HCT116 (cell line): ENCODE measurements at regions of chr6 and their contacts with region 1.

Region 1: DNA sequence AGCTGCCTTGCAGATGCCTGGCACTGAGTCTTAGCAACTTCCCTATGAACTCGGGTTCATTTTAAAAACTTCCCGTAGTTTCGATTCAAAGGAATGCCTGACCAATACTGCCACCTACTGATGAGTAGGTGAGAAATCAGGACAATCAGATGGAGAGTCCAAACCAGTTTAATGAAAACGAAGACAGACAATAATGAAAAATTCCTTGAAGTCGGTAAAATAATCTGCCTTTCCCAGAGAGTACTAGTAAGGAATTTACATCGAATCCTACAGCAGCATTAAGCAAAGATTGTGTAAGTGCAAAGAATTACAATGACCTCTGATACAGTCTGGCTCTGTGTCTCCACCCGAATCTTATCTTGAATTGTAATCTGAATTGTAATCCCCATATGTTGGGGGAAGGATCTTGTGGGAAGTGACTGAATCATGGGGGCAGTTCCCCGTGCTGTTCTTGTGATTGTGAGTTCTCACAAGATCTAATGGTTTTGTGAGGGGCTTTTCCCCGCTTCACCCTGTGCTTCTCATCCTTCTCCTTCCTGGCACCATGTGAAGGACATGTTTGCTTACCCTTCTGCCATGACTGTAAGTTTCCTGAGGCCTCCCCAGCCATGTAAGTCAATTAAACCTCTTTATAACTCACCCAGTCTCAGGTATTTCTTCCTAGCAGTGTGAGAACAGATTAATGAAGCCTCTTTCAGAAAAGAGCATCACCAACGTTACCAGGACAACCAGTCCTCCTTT is 134.4 kb downstream of the ARHGAP18 start:
- DNase-seq: peak; percentile 27
- ATAC-seq: peak; percentile 89
- H3K4me3 ChIP-seq: no peak overlapping the region
- H3K27ac ChIP-seq: peak overlapping the region; percentile 40
- H3K4me1 ChIP-seq: peaks cover 12 to 13% of the 10 kb centered on the region in 2 experiments; a peak in 3 of 4 replicates
- H3K27me3 ChIP-seq: no peaks in the 10 kb centered on the region
- CTCF ChIP-seq: peak; percentile 55 to 80 (median 68); a peak in 5 of 6 replicates
- POLR2A ChIP-seq: no peak
- RAD21 ChIP-seq: peak; percentile 85

Region 2: DNA sequence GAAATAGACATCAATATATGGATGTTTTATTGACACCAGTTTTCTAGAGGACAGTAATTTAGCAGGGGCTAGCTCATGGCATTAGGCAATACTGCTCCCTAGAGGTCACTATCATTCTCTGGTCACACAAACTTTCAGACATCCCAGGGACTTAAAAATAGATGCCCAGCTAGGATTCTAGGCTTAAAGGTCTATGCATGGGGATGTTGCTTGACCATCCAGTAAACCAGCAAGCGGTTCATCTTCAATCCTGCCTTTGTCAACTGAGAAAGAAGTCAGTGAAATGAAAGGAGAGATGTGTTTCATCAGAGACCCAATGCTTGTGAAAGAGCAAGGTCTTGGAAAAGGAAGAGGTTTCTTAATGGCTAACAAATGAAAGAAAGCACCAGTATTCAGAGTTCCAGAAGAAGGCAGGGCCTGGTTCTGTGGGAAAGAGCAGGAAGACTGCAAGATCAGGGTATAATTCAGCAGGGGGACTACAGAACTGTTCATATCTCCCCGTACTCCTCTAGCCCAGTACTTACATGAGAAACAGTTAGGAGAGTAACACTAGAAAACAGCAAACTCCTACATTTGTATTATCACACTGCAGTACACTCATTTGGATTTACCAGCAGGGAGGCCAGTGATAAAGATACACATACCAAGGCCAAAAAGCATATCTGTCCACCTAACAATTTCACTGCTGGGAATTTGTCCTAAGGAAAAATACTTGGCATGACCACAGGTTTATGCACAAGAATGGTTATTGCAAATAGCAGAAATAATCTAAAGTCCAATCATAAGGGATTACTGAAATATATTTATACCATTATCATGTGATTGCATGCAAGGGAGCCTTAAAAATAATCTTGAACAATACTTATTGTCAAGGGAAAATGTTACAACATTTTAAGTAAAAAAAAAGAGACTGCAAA is 844.0 kb before region 1 on chr6:
- CTCF ChIA-PET with region 1: no interaction called
- POLR2A ChIA-PET with region 1: no interaction called
- RAD21 ChIA-PET with region 1: no interaction called
- intact Hi-C with region 1: loop called (anchors 10 kb)
- DNase-seq: peak; percentile 40
- ATAC-seq: peak; percentile 88
- H3K4me3 ChIP-seq: no peak overlapping the region
- H3K27ac ChIP-seq: no peak overlapping the region
- H3K4me1 ChIP-seq: no peaks in the 10 kb centered on the region
- H3K27me3 ChIP-seq: no peaks in the 10 kb centered on the region
- CTCF ChIP-seq: peak; percentile 55 to 74 (median 67)
- POLR2A ChIP-seq: no peak
- RAD21 ChIP-seq: peak; percentile 88